Left ventricle myocardium superior (tissue), 1 donor: ENCODE measurements at regions of chr15 and their contacts with region 1.

Region 1: DNA sequence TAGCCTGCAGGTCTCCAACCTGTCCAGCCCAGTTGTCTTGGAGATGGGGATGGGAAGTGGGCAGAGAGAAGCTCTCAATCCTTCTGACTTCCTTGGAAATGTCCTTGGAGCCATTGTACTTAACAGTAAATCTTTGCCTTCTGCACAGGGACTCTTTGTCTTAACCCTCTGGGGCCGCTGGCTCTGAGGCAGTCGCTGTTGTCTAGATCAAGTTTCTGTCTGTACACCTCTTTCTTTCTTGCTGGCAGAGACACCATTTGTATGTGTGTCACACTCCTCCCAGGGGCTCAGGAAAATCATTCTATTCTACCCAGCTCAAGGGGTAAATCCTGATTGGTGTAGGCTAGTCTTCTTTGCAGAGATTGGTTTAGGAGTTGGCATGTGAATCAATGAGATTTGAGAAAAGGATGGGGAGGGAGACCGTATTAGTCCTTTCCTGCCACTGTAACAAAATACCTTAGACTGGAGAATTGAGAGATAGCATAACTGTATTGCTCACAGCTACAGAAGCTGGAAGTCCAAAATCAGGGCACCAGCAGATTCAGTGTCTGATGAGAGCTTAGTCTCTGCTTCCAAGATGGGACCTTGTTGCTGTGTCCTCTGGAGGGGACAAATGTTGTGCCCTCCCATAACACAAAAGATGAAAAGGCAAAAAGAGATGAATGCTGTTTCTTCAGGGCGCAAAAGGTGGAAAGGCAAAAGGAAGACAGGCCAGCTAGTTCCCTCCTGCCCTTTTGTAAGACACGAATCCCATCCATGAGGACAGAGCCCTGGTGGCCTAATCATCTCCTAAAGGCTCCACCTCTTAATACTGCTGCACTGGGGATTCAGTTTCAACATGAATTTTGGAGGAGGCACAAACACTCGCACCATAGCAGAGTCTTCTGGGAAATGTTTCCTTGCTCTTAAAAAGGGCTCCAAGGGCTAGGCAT is 66.3 kb downstream of the PPCDC start:
- DNase-seq: no peak
- ATAC-seq: no peak

Region 2: GRCh38 chr15:75023181-75023871 is 66.4 kb before region 1 on chr15 and contains the start of gene PPCDC:
- intact Hi-C with region 1: loop called (anchors 10 kb)
- DNase-seq: peak; percentile 98
- ATAC-seq: peak; percentile 98
- total RNA-seq, gene PPCDC: 5.1 TPM